H1 (cell line): ENCODE measurements at regions of chr22 and their contacts with region 1.

Region 1: DNA sequence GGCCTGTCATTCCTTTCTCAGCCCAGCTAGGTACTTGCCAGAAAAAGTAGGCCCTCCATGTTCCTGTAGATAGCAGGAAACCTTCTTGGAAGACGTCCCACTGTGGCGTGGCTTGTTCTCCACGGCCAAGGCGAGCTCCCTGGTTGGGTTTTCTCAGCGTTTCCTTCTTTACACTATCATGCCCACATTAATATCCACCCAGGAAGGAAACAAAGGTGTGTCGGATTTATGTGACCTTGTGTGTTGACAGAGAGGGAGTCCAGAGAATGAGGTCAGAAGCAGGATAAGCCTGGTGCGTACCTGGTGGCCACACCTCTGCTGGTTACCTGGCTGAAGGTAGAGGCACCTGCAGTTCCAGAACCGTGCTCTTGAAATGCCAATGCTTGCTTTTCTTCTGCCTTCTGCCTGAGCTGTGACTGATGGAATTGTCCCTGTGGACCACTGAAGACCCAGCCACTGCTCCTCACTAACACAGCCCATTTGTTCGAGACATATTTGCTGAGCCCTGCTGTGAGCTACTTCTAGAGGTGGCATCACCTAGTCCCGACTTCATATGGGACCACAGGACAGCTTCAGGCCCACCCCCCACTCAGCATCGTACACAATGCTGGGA is 7.9 kb downstream of the ASPHD2 start:
- DNase-seq: no peak
- H3K4me3 ChIP-seq: no peak overlapping the region
- H3K27ac ChIP-seq: no peak overlapping the region
- H3K4me1 ChIP-seq: no peaks in the 10 kb centered on the region
- H3K27me3 ChIP-seq: no peaks in the 10 kb centered on the region
- CTCF ChIP-seq: no peak
- EP300 ChIP-seq: no peak
- POLR2A ChIP-seq: no peak
- RAD21 ChIP-seq: no peak

Region 2: GRCh38 chr22:26259519-26259918 is 177.5 kb before region 1 on chr22:
- CTCF ChIA-PET with region 1: no interaction called
- POLR2A ChIA-PET with region 1: no interaction called
- DNase-seq: peak; percentile 44 to 73
- H3K4me3 ChIP-seq: no peak overlapping the region
- H3K27ac ChIP-seq: no peak overlapping the region
- H3K4me1 ChIP-seq: no peaks in the 10 kb centered on the region
- H3K27me3 ChIP-seq: peaks cover 0 to 3% (median 0%) of the 10 kb centered on the region in 4 experiments; a peak in 2 of 7 replicates
- CTCF ChIP-seq: 0 out of 4 replicates have a peak, but pooled peaks of 1 of the 3 experiments have one; percentile 6
- EP300 ChIP-seq: no peak
- POLR2A ChIP-seq: no peak
- RAD21 ChIP-seq: peak; percentile 50 to 53

Region 3: GRCh38 chr22:26295563-26296126 is 141.4 kb before region 1 on chr22:
- CTCF ChIA-PET with region 1: no interaction called
- POLR2A ChIA-PET with region 1: no interaction called
- DNase-seq: no peak
- H3K4me3 ChIP-seq: no peak overlapping the region
- H3K27ac ChIP-seq: no peak overlapping the region
- H3K4me1 ChIP-seq: peaks cover 7 to 13% (median 10%) of the 10 kb centered on the region in 4 experiments; a peak in 4 of 7 replicates
- H3K27me3 ChIP-seq: no peaks in the 10 kb centered on the region; a peak in 1 of 7 replicates
- CTCF ChIP-seq: no peak
- EP300 ChIP-seq: no peak
- POLR2A ChIP-seq: no peak
- RAD21 ChIP-seq: no peak

Region 4: DNA sequence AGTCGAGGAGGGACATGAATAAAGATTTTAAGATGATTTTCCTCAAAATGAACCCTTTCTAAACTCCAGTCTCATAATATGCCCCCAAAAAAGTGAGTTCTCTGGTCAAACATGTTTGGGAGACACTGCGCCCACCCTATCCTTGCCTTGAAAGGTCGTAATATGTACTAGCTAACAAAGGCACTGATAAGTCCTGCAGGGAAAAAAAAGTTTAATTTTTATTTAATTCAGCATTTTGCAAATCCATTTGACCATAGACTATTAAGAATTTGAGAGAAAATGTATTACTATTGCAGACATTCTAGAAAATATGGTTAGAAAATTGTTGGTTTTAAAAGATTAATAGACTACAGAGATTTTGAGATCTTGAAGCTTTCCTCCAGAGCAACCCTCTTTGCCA is 128.5 kb before region 1 on chr22:
- CTCF ChIA-PET with region 1: no interaction called
- POLR2A ChIA-PET with region 1: no interaction called
- DNase-seq: no peak
- H3K4me3 ChIP-seq: no peak overlapping the region
- H3K27ac ChIP-seq: no peak overlapping the region
- H3K4me1 ChIP-seq: no peaks in the 10 kb centered on the region; a peak in 2 of 7 replicates
- H3K27me3 ChIP-seq: peaks cover 0 to 2% (median 0%) of the 10 kb centered on the region in 4 experiments; a peak in 1 of 7 replicates
- CTCF ChIP-seq: no peak
- EP300 ChIP-seq: no peak
- POLR2A ChIP-seq: no peak
- RAD21 ChIP-seq: no peak

Region 5: DNA sequence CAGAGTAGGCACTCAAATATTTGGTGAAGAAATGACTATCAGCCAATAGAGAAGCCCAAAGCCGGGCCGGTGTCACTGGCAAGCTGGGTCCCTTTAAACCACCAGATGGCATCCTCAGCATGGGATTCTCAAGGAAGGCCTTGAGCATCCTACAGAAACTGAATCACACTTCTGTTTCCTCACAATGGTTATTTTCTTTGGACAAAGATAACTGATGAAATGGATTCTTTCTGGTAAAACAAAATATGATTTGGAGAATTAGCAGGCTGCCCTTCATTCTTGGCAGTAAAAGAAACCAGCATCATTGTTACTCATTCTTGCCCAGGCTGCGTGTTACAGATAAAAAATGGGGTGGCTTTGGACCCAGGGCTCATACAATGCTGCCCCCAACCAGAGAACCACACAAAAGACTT is 38.3 kb before region 1 on chr22:
- CTCF ChIA-PET with region 1: interaction called, 23 read pairs
- POLR2A ChIA-PET with region 1: no interaction called
- DNase-seq: peak; percentile 33 to 62
- H3K4me3 ChIP-seq: no peak overlapping the region
- H3K27ac ChIP-seq: no peak overlapping the region
- H3K4me1 ChIP-seq: no peaks in the 10 kb centered on the region
- H3K27me3 ChIP-seq: no peaks in the 10 kb centered on the region
- CTCF ChIP-seq: peak; percentile 66 to 82 (median 79)
- EP300 ChIP-seq: no peak
- POLR2A ChIP-seq: no peak
- RAD21 ChIP-seq: peak; percentile 91 to 92

Region 6: DNA sequence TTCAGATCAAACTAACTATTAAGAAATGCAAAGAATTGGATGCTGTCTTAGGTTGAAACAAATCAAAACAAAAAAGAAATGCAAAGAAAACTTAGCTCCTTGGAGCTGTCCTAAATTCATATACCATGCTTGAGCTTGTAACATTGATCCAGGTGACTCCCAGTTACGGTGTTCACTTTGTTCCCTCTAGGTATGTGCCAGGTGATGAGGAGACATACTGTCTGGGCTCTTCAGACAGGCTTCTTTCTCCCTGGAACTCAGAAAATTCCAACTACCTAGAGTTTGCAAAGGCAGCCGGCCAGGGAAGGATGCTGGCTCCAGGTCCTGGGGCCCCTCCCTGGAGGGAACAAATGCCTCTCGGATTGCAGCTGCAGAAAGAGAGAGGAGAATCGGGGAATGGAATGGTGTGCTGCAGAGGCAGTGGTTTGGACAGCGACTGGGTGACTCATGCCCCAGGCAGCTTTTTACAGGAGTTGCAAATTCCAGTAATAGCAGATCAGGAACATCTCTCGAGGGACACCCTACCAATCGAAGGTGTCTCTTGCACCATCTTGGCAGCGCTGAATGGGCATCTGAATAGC is 20.2 kb before region 1 on chr22:
- CTCF ChIA-PET with region 1: interaction called, 14 read pairs
- POLR2A ChIA-PET with region 1: no interaction called
- DNase-seq: peak; percentile 54 to 70
- H3K4me3 ChIP-seq: no peak overlapping the region
- H3K27ac ChIP-seq: no peak overlapping the region
- H3K4me1 ChIP-seq: no peaks in the 10 kb centered on the region
- H3K27me3 ChIP-seq: 0 out of 7 replicates have a peak, but pooled peaks cover 0 to 4% (median 0%) of the 10 kb centered on the region in 4 experiments
- CTCF ChIP-seq: no peak
- EP300 ChIP-seq: no peak
- POLR2A ChIP-seq: no peak
- RAD21 ChIP-seq: no peak

Region 7: GRCh38 chr22:26483439-26484359 is 46.7 kb after region 1 on chr22 and contains the starts of genes HPS4 and SRRD:
- CTCF ChIA-PET with region 1: interaction called, 3 read pairs
- POLR2A ChIA-PET with region 1: interaction called, 14 read pairs
- DNase-seq: peak; percentile 62 to 96
- H3K4me3 ChIP-seq: peak within 1 kb of the TSS; percentile 77 to 99 (median 90)
- H3K27ac ChIP-seq: peak within 1 kb of the TSS; percentile 76
- H3K4me1 ChIP-seq: peaks cover 0 to 14% (median 6%) of the 10 kb centered on the region in 4 experiments; a peak in 5 of 7 replicates
- H3K27me3 ChIP-seq: no peaks in the 10 kb centered on the region; a peak in 1 of 7 replicates
- CTCF ChIP-seq: no peak
- EP300 ChIP-seq: peak in 1 of 2 experiments; percentile 85; a peak in 2 of 3 replicates
- POLR2A ChIP-seq: peak; percentile 64 to 92
- RAD21 ChIP-seq: no peak
- total RNA-seq, gene HPS4: 32.9 and 35.2 TPM in 2 replicates
- total RNA-seq, gene SRRD: 25.3 and 26.3 TPM in 2 replicates

Region 8: DNA sequence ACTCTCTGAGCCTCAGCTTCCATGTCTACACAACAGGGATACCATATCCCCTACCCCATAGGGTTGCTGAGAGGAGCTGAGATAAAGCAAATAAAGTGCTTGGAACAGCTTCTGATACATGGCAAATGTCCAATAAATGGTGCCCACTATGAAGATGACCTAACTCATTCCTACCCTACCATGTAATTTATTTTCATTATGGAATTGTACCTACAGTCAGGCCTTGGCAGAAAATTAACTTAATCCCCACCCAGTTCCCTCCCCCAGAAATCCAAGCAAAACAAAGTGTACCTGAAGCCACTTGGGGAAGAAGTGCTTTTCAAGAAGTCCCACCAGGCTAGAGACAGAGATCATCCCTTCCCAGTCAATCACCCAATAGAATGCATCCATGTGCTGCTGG is 57.5 kb after region 1 on chr22:
- CTCF ChIA-PET with region 1: no interaction called
- POLR2A ChIA-PET with region 1: no interaction called
- DNase-seq: no peak
- H3K4me3 ChIP-seq: no peak overlapping the region
- H3K27ac ChIP-seq: no peak overlapping the region
- H3K4me1 ChIP-seq: no peaks in the 10 kb centered on the region
- H3K27me3 ChIP-seq: no peaks in the 10 kb centered on the region
- CTCF ChIP-seq: no peak
- EP300 ChIP-seq: no peak
- POLR2A ChIP-seq: no peak
- RAD21 ChIP-seq: no peak